ENCODE measurements at regions of chr1 and their contacts with region 1.

Region 1: DNA sequence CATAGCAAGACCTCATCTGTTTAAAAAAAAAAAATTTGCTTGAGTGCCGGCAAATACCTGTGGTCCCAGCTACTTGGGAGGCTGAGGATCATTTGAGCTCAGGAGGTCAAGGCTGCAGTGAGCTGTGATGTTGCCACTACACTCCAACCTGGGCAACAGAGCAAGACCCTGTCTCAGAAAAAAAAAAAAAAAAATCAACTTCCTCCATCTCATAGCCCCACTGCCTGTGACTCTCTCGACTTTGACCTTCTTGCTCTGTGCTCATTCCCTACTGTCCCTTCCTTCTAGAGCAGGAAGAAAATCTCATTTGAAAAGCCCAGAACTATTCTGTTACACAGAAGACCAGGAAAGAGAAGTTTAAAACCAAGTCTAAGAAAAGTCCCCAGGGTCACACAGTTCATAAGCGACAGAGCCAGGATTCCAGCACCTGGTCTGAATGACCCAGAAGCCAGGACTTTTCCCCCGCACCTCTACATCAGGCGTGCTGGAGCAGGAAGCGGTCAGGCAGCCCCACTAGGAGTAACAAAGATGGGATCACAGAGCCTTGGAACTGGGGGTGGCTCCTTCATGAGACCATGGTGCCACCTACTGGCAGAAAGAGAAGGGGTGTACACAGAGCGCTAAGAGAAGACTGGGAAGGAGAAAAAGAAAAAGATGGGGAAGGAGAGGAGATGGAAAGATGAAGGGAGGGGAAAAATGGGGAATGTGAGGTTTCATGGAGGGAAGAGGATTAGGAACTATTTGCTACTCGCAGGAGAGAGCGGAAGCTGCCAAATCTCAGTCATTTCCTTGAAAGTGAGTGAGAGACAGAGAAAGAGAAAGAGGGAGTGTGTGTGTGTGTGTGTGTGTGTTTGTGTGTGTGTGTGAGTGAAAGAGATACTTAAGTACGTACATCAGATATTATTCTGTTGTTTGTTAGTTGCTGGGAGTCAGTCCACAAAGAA is 3.1 kb upstream of the P3R3URF start:
- DNase-seq: peak; percentile 94
- H3K4me3 Mint-ChIP-seq: no peak overlapping the region
- H3K27ac Mint-ChIP-seq: no peak overlapping the region
- H3K4me1 Mint-ChIP-seq: peaks cover 7% of the 10 kb centered on the region
- H3K27me3 Mint-ChIP-seq: no peaks in the 10 kb centered on the region
- CTCF ChIP-seq: peak; percentile 89

Region 2: DNA sequence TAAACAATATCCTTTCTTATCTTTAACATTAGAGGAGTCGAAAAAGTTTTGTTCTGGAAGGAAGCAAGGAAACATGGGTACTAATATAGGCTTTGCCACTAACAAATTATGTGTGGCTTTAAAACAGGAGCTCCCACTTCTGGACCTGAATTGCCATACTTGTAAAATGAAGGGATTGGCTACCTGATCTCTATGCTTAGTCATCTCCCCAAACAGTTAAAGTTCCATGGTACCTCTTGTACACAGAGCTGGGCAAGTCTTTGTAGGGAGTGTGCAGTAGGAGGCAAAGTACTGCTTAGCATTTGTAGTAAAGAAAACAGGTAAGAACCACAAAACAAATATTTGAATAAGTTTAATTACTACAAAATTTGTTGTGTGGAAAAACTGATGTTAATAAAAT is 294.7 kb before region 1 on chr1:
- CTCF ChIA-PET with region 1: no interaction called
- POLR2A ChIA-PET with region 1: interaction called, 3 read pairs
- intact Hi-C with region 1: loop called (anchors 10 kb)
- DNase-seq: peak; percentile 22
- H3K4me3 Mint-ChIP-seq: no peak overlapping the region
- H3K27ac Mint-ChIP-seq: peak overlapping the region; percentile 12
- H3K4me1 Mint-ChIP-seq: peaks cover 17% of the 10 kb centered on the region
- H3K27me3 Mint-ChIP-seq: no peaks in the 10 kb centered on the region
- CTCF ChIP-seq: no peak

Region 3: DNA sequence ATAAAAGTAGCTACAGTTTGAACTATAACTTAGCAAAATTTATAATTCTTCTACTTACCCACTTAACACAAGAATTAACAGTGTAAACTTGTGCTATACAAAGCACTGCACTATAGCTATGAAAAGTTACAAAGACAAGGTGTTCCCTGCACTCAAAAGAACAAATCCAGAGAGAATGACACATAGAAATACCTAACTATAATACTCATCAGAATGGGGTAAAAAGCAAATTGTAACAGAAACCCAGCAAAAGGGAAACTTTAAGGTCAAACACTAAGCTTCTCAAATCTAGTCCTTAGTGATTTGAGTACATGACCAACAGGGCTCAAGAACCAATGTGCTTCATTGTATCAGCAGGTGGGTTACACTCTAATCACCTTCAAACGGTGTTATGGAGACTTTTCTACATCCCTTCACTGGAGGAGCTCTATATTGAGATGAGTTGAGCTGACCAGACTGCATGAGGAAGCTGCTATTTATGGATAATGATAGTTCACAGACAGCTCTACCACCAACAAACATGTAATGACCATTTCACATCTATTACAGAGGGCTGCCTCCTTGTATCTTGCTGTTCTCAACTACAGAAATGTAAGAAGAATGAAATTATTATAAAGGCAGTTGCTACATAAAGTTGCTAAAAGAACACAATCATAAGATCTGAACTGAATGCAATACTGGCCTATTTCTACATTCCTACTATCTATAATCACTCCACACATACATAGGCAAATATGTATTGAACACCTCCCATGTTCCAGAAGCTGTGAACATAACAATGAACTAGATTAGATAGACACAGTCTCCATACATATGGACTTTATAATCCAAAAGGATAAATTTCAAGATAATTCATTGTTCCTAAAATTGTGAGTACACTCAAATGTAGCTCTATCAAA is 94.6 kb before region 1 on chr1:
- CTCF ChIA-PET with region 1: interaction called, 7 read pairs
- POLR2A ChIA-PET with region 1: interaction called, 10 read pairs
- intact Hi-C with region 1: no loop called
- DNase-seq: peak; percentile 23
- H3K4me3 Mint-ChIP-seq: peak overlapping the region; percentile 8
- H3K27ac Mint-ChIP-seq: peak overlapping the region; percentile 75
- H3K4me1 Mint-ChIP-seq: peaks cover 41% of the 10 kb centered on the region
- H3K27me3 Mint-ChIP-seq: no peaks in the 10 kb centered on the region
- CTCF ChIP-seq: no peak

Region 4: GRCh38 chr1:46197964-46198811 is 18.8 kb after region 1 on chr1 and contains the start of gene POMGNT1:
- CTCF ChIA-PET with region 1: interaction called, 27 read pairs
- POLR2A ChIA-PET with region 1: interaction called, 125 read pairs
- intact Hi-C with region 1: loop called (anchors 1 kb)
- DNase-seq: peak; percentile 73
- H3K4me3 Mint-ChIP-seq: peak within 1 kb of the TSS; percentile 76
- H3K27ac Mint-ChIP-seq: peak within 1 kb of the TSS; percentile 80
- H3K4me1 Mint-ChIP-seq: peaks cover 25% of the 10 kb centered on the region
- H3K27me3 Mint-ChIP-seq: no peaks in the 10 kb centered on the region
- CTCF ChIP-seq: peak; percentile 24
- total RNA-seq, gene POMGNT1: 85.4 and 90.7 TPM in 2 replicates

Region 5: DNA sequence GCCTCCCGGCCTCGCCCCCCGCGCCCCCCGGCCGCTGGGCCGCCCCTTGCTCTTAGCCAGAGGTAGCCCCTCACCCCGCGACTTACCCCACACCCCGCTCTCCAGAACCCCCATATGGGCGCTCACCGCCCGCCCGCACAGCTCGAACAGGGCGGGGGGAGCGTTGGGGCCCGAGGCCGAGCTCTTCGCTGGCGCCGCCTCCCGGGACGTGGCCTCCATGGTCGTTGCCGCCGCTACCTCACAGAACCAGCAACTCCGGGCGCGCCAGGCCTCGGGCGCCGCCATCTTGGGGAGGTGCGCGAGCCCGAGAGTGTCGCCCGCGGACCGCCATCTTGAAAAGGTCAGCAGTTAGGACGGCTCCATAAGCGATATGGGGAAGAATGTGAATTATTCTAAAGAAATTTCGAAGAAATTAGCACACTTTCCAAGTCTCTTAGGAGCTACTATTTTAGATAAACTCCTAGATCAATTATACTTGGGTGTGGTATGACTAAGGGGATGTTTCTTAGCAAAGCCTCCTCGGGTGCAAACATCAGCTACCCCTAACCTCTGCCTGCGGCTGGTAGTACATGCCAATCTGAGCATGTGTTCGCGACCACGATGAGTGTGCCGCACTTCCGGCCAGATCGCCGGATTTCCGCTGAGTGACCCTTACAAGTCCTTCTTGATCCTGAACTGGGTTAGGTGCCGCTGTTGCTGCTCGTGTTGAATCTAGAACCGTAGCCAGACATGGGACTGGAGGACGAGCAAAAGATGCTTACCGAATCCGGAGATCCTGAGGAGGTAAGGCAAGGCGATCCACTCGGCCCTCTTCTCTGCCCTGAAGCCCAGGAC is 123.8 kb after region 1 on chr1 and contains the starts of genes LRRC41 and UQCRH:
- CTCF ChIA-PET with region 1: interaction called, 3 read pairs
- POLR2A ChIA-PET with region 1: interaction called, 13 read pairs
- intact Hi-C with region 1: no loop called
- DNase-seq: peak; percentile 96
- H3K4me3 Mint-ChIP-seq: peak within 1 kb of the TSS; percentile 99
- H3K27ac Mint-ChIP-seq: peak within 1 kb of the TSS; percentile 100
- H3K4me1 Mint-ChIP-seq: peaks cover 39% of the 10 kb centered on the region
- H3K27me3 Mint-ChIP-seq: no peaks in the 10 kb centered on the region
- CTCF ChIP-seq: no peak
- total RNA-seq, gene LRRC41: 92.6 and 105 TPM in 2 replicates
- total RNA-seq, gene UQCRH: 299 and 318 TPM in 2 replicates

Measured in MCF 10A (cell line).